A673 (cell line): ENCODE measurements at regions of chr15 and their contacts with region 1.

Region 1: GRCh38 chr15:82709421-82710207 is at the start of gene AP3B2:
- DNase-seq: peak; percentile 86
- H3K4me3 ChIP-seq: peak within 1 kb of the TSS; percentile 96
- H3K27ac ChIP-seq: no peak within 1 kb of the TSS
- H3K4me1 ChIP-seq: peaks cover 8% of the 10 kb centered on the region
- H3K27me3 ChIP-seq: no peaks in the 10 kb centered on the region
- CTCF ChIP-seq: no peak
- total RNA-seq, gene AP3B2: 19.0 and 22.0 TPM in 2 replicates

Region 2: GRCh38 chr15:82312586-82313349 is 396.8 kb before region 1 on chr15:
- CTCF ChIA-PET with region 1: no interaction called
- POLR2A ChIA-PET with region 1: no interaction called
- intact Hi-C with region 1: no loop called
- DNase-seq: no peak
- H3K4me3 ChIP-seq: no peak overlapping the region
- H3K27ac ChIP-seq: no peak overlapping the region
- H3K4me1 ChIP-seq: no peaks in the 10 kb centered on the region
- H3K27me3 ChIP-seq: no peaks in the 10 kb centered on the region
- CTCF ChIP-seq: no peak

Region 3: DNA sequence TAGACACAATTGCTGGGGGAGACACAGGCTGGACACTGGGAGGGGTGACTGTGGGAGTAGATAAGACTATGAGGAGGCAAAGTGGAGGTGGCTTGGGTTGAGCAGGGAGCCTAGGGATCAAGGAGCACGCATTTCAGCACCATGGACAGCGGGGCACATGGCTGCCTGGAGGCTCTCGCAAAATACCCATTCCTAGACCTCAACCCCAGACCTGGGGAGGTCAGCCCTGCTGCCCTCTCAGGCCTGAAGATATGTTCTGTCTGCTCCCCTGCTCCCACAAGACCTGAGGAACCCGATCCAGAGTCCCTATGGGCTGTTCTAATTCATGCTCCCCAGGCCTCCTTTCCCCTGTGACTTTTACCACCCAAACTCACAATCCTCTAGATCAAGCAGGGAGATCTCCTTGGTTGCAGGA is 46.4 kb before region 1 on chr15:
- CTCF ChIA-PET with region 1: no interaction called
- POLR2A ChIA-PET with region 1: no interaction called
- intact Hi-C with region 1: loop called (anchors 5 kb)
- DNase-seq: peak; percentile 54
- H3K4me3 ChIP-seq: no peak overlapping the region
- H3K27ac ChIP-seq: no peak overlapping the region
- H3K4me1 ChIP-seq: no peaks in the 10 kb centered on the region
- H3K27me3 ChIP-seq: no peaks in the 10 kb centered on the region
- CTCF ChIP-seq: no peak